Activated B cell treated with CpG ODN at 0.5 μM for 24 hours (primary cell): ENCODE measurements at regions of chr1 and their contacts with region 1.

Region 1: DNA sequence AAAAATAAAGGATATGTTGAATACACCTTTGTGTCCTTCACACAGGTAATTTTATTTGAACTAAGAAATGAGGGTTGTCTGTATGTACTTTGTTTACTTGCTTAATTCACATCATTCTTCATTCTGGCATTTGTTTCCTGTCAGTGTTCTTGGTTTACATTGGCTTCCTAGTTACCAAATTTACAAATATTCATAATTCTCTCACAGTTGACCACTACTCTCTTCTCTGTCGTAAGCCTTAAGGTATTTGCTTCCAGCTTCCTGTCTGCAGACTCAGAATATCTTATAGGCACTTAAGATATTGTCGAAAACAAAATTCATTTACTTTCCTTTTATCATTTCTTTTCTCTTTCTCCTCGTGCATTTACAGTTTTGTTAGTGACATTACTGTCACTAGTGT is 15.9 kb downstream of the RNPC3 start:
- DNase-seq: no peak
- ATAC-seq: no peak
- H3K4me3 Mint-ChIP-seq: no peak overlapping the region
- H3K27ac Mint-ChIP-seq: no peak overlapping the region
- H3K4me1 Mint-ChIP-seq: no peaks in the 10 kb centered on the region
- H3K27me3 Mint-ChIP-seq: no peaks in the 10 kb centered on the region
- CTCF ChIP-seq: no peak

Region 2: DNA sequence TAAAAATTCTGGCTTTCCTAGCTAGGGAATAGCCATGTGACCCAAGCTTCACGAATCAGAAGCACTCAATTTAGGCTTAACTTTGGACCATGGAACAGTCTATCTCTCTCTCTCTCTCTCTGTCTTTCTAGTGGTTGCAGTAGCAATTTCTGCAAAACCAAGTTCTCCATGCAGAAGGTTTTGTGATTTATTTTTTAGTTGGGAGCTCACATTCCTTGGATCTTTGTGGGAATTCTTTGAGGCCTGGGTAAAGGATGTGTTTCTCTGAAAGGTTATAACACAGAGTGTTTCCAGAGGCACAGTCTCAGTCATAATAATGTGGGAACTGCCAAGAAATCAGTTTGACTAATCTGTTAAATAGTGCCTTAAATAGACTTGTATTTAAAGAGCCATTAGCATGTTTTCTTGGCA is 320.8 kb before region 1 on chr1:
- CTCF ChIA-PET with region 1: no interaction called
- POLR2A ChIA-PET with region 1: no interaction called
- intact Hi-C with region 1: no loop called
- DNase-seq: no peak
- ATAC-seq: no peak
- H3K4me3 Mint-ChIP-seq: no peak overlapping the region
- H3K27ac Mint-ChIP-seq: no peak overlapping the region
- H3K4me1 Mint-ChIP-seq: no peaks in the 10 kb centered on the region
- H3K27me3 Mint-ChIP-seq: no peaks in the 10 kb centered on the region
- CTCF ChIP-seq: no peak

Region 3: GRCh38 chr1:103560427-103560826 is 19.0 kb after region 1 on chr1:
- CTCF ChIA-PET with region 1: no interaction called
- POLR2A ChIA-PET with region 1: interaction called, 4 read pairs
- intact Hi-C with region 1: loop called (anchors 2 kb)
- DNase-seq: no peak
- ATAC-seq: no peak
- H3K4me3 Mint-ChIP-seq: no peak overlapping the region
- H3K27ac Mint-ChIP-seq: no peak overlapping the region
- H3K4me1 Mint-ChIP-seq: peaks cover 9% of the 10 kb centered on the region
- H3K27me3 Mint-ChIP-seq: no peaks in the 10 kb centered on the region
- CTCF ChIP-seq: no peak